RWPE1 (cell line): ENCODE measurements at regions of chr10 and their contacts with region 1.

Region 1: DNA sequence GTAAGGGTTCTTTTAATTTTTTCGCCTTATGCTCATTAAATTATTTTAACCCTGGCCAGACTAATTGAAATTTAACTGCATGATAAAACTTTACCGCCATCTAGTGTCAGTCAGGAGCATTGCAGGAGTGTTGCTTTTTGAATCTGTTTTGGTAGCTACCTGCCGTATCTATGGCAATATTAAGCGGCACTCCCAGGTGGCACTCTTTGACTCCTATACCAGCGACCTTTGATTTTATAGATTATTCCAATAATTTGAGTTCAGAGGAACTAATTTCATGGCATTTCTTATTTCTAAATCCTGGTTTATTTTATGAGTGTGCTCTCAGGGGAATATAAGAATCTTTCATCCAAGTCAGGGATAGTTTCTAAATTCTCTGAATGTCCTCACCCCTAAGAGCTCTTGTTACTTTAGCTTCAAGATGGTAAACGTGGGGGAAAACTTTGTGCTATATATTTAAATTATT is 198.9 kb downstream of the REEP3 start:
- DNase-seq: peak; percentile 38
- H3K27ac ChIP-seq: no peak overlapping the region
- CTCF ChIP-seq: peak; percentile 96

Region 2: GRCh38 chr10:63166742-63167258 is 553.3 kb before region 1 on chr10:
- CTCF ChIA-PET with region 1: interaction called, 33 read pairs
- POLR2A ChIA-PET with region 1: no interaction called
- DNase-seq: peak; percentile 49
- H3K27ac ChIP-seq: no peak overlapping the region
- CTCF ChIP-seq: peak; percentile 84

Region 3: GRCh38 chr10:63430097-63430998 is 289.8 kb before region 1 on chr10:
- CTCF ChIA-PET with region 1: no interaction called
- POLR2A ChIA-PET with region 1: no interaction called
- DNase-seq: peak; percentile 64
- H3K27ac ChIP-seq: peak overlapping the region; percentile 58; the same call in 1 of the 2 replicates
- CTCF ChIP-seq: no peak

Region 4: DNA sequence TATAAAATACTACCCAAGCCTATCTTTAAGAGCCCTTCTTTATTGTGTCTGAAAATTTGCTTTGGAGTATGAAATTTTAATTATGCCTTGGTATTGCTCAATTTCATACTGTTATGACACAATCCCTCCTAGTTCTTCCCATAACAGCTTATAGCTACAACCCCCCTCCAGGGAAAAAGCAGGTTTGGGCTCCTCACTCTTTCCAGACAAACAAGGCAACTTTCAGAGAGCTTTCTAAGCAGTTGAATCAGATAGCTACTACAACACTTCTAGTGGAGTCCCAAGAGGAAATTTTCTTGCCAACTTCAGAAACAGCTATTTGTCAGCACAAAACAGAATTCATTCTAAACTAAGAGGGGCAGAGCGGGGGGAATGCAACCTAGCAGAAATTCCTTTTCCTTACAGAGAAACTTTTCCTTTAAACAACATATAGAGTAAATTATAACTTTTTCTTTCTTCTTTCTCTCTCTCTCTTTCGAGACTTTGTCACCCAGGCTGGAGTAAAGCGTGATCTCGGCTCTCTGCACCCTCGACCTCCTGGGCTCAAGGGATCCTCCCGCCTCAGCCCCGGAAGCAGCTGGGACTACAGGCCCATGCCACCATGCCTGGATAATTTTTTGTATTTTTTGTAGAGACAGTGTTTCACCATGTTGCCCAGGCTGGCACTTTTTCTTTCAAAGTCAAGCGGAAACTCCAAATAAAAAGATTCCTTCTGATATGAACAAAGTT is 228.4 kb before region 1 on chr10:
- CTCF ChIA-PET with region 1: no interaction called
- POLR2A ChIA-PET with region 1: no interaction called
- DNase-seq: peak; percentile 63
- H3K27ac ChIP-seq: peak overlapping the region; percentile 79
- CTCF ChIP-seq: no peak

Region 5: DNA sequence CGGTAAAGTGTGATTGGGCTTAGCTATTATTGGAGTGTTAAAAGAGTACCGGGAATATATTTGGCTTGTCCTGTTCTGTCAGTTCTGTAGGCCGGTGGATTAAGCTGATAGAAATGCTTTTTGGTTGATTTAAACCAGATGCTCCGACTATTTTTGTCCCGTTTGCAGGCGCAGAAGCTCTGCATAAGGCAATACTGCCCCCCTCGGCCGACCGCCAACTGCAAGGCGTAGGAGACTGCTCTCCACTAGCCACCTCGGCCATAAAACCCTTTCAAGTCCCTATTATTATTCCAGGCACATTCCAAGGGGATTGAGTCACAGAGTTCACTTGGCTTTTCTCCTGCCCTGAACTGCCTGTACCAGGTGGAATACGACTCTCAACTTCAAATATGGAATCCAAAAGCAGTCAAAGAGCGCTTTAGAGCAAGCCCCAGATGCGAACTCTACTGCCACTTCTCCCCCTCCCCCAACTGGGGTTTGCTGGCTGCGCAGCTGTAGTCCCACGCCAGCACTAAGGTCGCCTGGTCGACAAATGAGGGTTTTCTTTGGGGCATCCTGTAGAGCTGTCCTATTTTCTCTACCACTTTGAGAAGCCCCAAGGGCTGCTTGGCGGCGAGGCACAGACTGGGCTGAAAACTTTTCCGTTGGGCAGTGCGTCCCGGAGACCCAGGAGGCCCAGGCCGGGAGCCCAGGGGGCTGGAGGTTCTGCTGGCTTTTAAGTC is 90.6 kb before region 1 on chr10:
- CTCF ChIA-PET with region 1: interaction called, 12 read pairs
- POLR2A ChIA-PET with region 1: interaction called, 4 read pairs
- DNase-seq: peak; percentile 95
- H3K27ac ChIP-seq: peak overlapping the region; percentile 100
- CTCF ChIP-seq: peak; percentile 83

Region 6: GRCh38 chr10:63651864-63652263 is 68.2 kb before region 1 on chr10:
- CTCF ChIA-PET with region 1: no interaction called
- POLR2A ChIA-PET with region 1: no interaction called
- DNase-seq: no peak
- H3K27ac ChIP-seq: no peak overlapping the region
- CTCF ChIP-seq: no peak

Region 7: DNA sequence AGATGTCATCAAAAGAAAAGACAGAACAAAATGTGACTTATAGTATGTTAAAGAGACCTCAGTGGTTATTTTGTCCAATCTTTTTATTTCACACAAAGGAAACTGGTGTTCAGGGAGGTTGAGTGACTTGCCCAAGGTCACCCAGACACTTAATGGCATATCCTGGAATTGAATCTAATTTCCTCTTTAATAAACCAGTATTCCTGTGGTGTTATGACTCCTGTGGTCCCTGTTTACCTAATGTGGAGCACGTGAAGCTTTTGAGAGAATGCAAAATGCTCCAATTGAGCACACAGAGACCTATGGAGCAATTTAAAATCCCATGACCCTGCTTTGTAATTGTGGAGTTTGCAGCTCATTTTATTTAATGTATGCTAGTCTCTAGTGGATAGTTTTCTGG is 53.0 kb after region 1 on chr10:
- CTCF ChIA-PET with region 1: no interaction called
- POLR2A ChIA-PET with region 1: no interaction called
- DNase-seq: no peak
- H3K27ac ChIP-seq: no peak overlapping the region
- CTCF ChIP-seq: no peak